ENCODE measurements at regions of chr3 and their contacts with region 1.

Region 1: DNA sequence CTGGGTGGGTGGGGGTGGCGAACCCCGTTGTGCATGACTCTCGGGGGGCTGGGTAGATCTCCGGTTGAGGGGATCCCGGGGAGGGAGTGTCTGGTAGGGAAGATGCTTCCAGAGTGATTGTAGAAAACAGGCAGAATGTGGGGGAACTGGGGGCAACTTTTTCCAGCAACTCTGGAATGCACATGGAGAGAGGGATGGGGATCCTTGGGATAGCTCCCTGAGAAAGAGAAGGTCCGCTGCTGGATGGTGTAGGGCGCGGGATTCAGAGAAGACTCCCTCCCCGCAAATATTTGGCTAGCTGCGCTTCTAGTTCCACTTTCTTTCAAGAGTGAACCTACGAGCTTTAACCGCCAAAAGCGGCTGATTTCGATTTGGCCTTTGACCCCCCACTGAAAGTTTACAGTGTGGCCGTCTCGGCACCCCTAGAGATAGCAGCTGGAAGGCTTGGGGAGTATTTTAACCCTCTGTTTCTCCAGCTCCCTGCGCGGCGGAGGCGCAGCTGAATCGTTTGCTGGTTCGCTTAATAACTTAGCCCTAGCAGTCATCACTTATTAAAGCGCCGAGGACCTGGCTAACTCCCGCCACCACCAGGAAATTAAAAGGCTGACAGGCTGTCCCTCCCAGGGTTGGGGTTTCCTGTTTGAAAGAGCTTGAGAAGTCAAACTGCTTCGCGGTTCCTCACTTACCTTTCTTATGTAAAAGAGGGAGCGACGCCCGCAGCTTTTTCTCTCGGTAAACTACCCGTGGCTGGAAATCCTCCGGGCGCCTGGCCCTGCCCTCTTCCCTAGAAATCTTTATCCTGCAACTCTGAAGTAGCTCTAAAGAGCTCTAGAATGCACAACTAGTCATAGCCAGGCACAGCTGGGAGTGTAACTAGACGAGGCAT is 1.2 kb downstream of the PHLDB2 start:
- DNase-seq: peak; percentile 68 to 90 (median 76)
- H3K4me3 ChIP-seq: peak overlapping the region; percentile 49 to 73 (median 62)
- H3K27ac ChIP-seq: peak overlapping the region; percentile 38 to 93 (median 80)
- H3K4me1 ChIP-seq: peaks cover 6 to 18% of the 10 kb centered on the region in 2 donors
- H3K27me3 ChIP-seq: no peaks in the 10 kb centered on the region
- CTCF ChIP-seq: peak; percentile 29 to 66 (median 55)
- POLR2A ChIP-seq: peak; percentile 30 to 77

Region 2: GRCh38 chr3:111723293-111724215 is 136.7 kb before region 1 on chr3:
- intact Hi-C with region 1: loop called (anchors 5 kb)
- DNase-seq: no peak
- H3K4me3 ChIP-seq: no peak overlapping the region
- H3K27ac ChIP-seq: no peak overlapping the region
- H3K4me1 ChIP-seq: no peaks in the 10 kb centered on the region
- H3K27me3 ChIP-seq: no peaks in the 10 kb centered on the region
- CTCF ChIP-seq: no peak
- POLR2A ChIP-seq: no peak

Region 3: DNA sequence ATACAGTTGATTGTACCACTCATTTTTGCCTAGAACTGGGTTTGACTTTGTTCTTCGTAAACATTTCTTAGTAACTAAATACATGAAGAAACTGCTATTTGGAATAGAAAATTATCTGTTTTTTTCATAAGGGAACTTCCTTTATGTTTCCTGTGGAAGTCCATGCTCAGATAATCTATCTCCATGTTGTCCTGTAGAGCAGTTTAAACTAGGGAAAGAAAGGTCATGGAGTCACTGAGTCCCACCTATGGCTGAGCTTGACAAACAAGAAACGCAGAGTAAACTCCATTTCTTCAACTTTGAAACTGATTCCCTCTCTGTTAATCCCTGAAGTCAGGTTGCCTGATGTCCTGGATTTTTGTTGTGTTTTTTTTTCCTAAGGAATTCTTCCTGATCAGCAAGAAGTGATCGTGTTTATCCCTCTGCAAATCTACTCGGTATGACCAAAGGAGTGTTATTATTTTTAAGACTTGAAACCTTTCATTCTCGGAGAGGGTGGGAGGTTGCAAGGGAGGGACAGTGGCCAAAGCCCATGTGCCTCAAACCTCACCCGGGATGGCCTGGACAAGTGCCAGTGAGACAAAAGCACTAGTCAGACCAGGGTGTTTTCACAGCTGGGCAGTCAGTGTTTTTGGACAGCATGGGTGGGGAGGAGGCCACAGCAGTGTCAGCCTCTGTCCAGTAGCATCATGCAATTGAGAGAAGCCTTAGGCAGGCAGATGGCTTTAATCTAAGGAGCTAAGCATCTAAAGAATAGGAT is 130.9 kb before region 1 on chr3:
- intact Hi-C with region 1: loop called (anchors 5 kb)
- DNase-seq: peak in 6 of 7 donors; percentile 24 to 62 (median 38)
- H3K4me3 ChIP-seq: no peak overlapping the region
- H3K27ac ChIP-seq: no peak overlapping the region
- H3K4me1 ChIP-seq: no peaks in the 10 kb centered on the region
- H3K27me3 ChIP-seq: no peaks in the 10 kb centered on the region
- CTCF ChIP-seq: no peak
- POLR2A ChIP-seq: no peak

Region 4: GRCh38 chr3:111967651-111968274 is 107.5 kb after region 1 on chr3:
- intact Hi-C with region 1: loop called in 1 of 2 experiments (anchors 10 kb)
- DNase-seq: peak; percentile 69 to 95 (median 88)
- H3K4me3 ChIP-seq: no peak overlapping the region
- H3K27ac ChIP-seq: peak overlapping the region in 2 of 5 donors; percentile 0 to 43
- H3K4me1 ChIP-seq: peaks cover 0 to 9% of the 10 kb centered on the region in 2 donors
- H3K27me3 ChIP-seq: no peaks in the 10 kb centered on the region
- CTCF ChIP-seq: peak; percentile 79 to 95 (median 92)
- POLR2A ChIP-seq: no peak